ENCODE measurements at regions of chr18 and their contacts with region 1.

Region 1: GRCh38 chr18:50429207-50429948 is 54.5 kb downstream of the SKA1 start:
- DNase-seq: no peak

Region 2: GRCh38 chr18:50218432-50219197 is 210.8 kb before region 1 on chr18:
- intact Hi-C with region 1: loop called (anchors 5 kb)
- DNase-seq: no peak

Region 3: GRCh38 chr18:50281295-50281971 is 147.9 kb before region 1 on chr18 and contains the start of gene MBD1:
- intact Hi-C with region 1: loop called (anchors 5 kb)
- DNase-seq: peak; percentile 99
- total RNA-seq, gene MBD1: 54.4 TPM

Region 4: DNA sequence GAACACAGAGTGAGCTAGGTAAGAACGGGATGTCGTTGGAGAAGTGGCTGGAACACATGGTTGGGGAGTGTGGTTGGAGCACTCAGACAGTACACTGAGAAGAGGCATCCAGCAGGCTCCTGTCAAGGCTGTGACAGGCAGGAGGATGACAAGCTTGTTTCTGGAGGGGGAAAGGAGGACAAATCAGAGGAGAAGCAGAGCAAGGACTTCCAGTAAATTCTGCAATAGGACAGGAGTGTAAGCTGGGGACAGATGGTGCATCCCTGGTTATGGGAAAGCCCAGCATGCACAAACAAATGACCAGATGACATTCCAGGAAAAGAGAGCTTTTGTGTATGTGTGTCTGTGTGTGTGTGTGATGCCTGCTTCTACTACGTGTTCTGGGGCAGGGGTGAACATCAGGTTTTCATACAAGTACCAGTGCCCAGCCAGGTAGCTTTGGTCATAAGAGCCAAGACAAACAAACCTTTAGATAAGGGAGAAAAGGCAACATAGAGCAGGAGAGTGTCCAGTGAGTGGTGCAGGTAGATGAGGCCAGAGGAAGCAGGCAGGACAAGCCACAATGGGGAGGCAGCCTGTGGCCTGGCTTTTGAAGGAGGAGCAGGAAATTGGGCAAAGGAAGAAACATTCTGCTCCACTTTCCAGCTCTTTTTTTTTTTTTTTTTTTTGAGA is 98.4 kb after region 1 on chr18:
- intact Hi-C with region 1: no loop called
- DNase-seq: no peak

Measured in cardiac septum (tissue), 1 donor.